ENCODE measurements at regions of chr7 and their contacts with region 1.

Region 1: GRCh38 chr7:35801392-35802101 is 690 bp downstream of the SEPTIN7 start:
- DNase-seq: peak; percentile 53 to 90 (median 78)

Region 2: GRCh38 chr7:35716038-35716803 is 85.3 kb before region 1 on chr7:
- intact Hi-C with region 1: loop called (anchors 5 kb)
- DNase-seq: peak in 41 of 42 donors; percentile 44 to 88 (median 71)

Region 3: GRCh38 chr7:35854311-35854710 is 52.8 kb after region 1 on chr7:
- intact Hi-C with region 1: loop called (anchors 10 kb)
- DNase-seq: peak in 32 of 42 donors; percentile 9 to 77 (median 46)